AG04449 (cell line): ENCODE measurements at regions of chr5 and their contacts with region 1.

Region 1: DNA sequence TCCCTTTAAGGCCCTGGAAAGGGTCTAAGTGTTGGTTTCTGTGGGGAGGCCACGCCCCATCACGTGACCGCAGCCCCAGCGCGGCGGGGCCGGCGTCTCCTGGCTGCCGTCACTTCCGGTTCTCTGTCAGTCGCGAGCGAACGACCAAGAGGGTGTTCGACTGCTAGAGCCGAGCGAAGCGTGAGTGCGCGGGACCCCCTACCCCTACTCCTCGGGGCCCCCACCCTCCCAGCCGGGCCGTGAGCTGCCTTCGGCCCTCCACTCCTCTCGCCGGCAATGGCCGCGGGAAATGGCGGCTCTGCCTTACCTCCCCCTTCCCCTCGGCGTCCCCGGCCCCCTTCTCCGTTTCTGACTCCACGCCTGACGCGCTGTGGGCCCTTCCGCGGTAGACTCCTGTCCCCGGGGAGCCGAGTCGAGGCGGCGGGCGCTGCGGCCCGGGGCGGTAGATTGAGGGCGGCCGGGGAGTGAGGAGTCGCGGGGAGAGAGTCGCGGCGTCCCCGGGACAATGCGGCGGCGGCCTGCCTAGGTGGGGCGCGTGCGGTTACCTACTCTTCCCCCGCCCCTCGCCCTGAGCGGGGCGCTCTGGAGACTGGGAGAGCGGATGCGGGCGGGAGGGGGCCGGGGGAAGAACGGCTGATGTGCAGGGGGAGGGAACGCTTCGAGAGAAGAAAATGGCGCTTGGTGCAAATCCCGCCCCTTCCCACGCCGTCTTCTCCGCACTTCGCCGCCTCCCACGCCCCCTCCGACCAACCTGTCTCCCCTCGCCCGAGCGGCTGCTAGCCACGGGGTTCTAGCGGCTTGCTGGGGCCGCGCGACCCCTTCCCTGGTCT is at the start of gene SUB1:
- DNase-seq: peak; percentile 24
- H3K4me3 ChIP-seq: peak within 1 kb of the TSS; percentile 90
- CTCF ChIP-seq: peak; percentile 3

Region 2: DNA sequence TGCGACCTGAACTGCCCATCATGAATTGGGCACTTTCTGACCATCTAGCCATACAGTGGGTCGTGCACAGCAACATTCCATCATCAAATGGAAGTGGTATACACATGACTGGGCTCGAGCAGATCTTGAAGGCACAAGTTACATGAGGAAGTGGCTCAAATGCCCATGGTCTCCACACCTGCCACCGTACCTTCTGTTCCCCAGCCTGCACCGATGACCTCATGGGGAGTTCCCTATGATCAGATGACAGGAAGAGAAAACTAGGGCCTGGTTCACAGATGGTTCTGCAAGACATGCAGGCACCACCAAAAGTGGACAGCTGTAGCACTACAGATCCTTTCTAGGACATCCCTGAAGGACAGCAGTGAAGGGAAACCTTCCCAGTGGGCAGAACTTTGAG is 294.7 kb before region 1 on chr5:
- CTCF ChIA-PET with region 1: no interaction called
- POLR2A ChIA-PET with region 1: no interaction called
- DNase-seq: no peak
- H3K4me3 ChIP-seq: no peak overlapping the region
- CTCF ChIP-seq: no peak

Region 3: GRCh38 chr5:32419791-32420190 is 165.9 kb before region 1 on chr5:
- CTCF ChIA-PET with region 1: interaction called, 17 read pairs
- POLR2A ChIA-PET with region 1: no interaction called
- DNase-seq: no peak
- H3K4me3 ChIP-seq: no peak overlapping the region
- CTCF ChIP-seq: no peak

Region 4: GRCh38 chr5:32479096-32479495 is 106.6 kb before region 1 on chr5:
- CTCF ChIA-PET with region 1: interaction called, 449 read pairs
- POLR2A ChIA-PET with region 1: no interaction called
- DNase-seq: no peak
- H3K4me3 ChIP-seq: no peak overlapping the region
- CTCF ChIP-seq: no peak

Region 5: GRCh38 chr5:32504989-32505596 is 80.6 kb before region 1 on chr5:
- CTCF ChIA-PET with region 1: interaction called, 34 read pairs
- POLR2A ChIA-PET with region 1: interaction called, 6 read pairs
- DNase-seq: peak; percentile 92
- H3K4me3 ChIP-seq: peak overlapping the region; percentile 46
- CTCF ChIP-seq: no peak

Region 6: DNA sequence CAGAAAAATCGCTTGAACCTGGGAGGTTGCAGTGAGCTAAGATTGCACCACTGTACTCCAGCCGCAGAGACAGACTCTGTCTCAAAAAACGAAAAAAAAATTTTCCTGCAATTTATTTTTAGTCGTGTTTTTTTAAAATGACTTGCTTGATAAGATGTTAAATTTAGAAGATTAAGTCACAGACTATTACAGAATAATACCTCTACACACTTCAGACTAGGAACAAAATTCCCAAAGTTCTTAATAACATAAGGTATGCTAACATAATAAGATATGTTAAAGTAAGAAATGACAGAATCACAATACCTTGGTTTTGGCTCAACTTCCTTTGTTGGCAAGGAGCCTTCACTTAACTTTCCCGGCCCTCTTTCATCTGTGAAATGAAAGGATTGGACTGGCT is 66.0 kb after region 1 on chr5:
- CTCF ChIA-PET with region 1: no interaction called
- POLR2A ChIA-PET with region 1: no interaction called
- DNase-seq: no peak
- H3K4me3 ChIP-seq: no peak overlapping the region
- CTCF ChIP-seq: no peak

Region 7: GRCh38 chr5:32865475-32865874 is 279.8 kb after region 1 on chr5:
- CTCF ChIA-PET with region 1: no interaction called
- POLR2A ChIA-PET with region 1: no interaction called
- DNase-seq: no peak
- H3K4me3 ChIP-seq: no peak overlapping the region
- CTCF ChIP-seq: no peak

Region 8: GRCh38 chr5:32880796-32881195 is 295.1 kb after region 1 on chr5:
- CTCF ChIA-PET with region 1: no interaction called
- POLR2A ChIA-PET with region 1: no interaction called
- DNase-seq: no peak
- H3K4me3 ChIP-seq: no peak overlapping the region
- CTCF ChIP-seq: no peak